ENCODE measurements at regions of chr1 and their contacts with region 1.

Region 1: GRCh38 chr1:205485338-205486228 is 18.9 kb upstream of the CDK18 start:
- DNase-seq: peak; percentile 89
- ATAC-seq: peak; percentile 82
- H3K4me3 ChIP-seq: no peak overlapping the region
- H3K27ac ChIP-seq: no peak overlapping the region
- H3K4me1 ChIP-seq: no peaks in the 10 kb centered on the region
- H3K27me3 ChIP-seq: peaks cover 7% of the 10 kb centered on the region; the same call in 1 of the 2 replicates
- CTCF ChIP-seq: peak; percentile 99

Region 2: GRCh38 chr1:204997591-204998355 is 487.8 kb before region 1 on chr1:
- CTCF ChIA-PET with region 1: no interaction called
- POLR2A ChIA-PET with region 1: no interaction called
- intact Hi-C with region 1: no loop called
- DNase-seq: no peak
- ATAC-seq: no peak
- H3K4me3 ChIP-seq: no peak overlapping the region
- H3K27ac ChIP-seq: no peak overlapping the region
- H3K4me1 ChIP-seq: no peaks in the 10 kb centered on the region
- H3K27me3 ChIP-seq: peaks cover 95% of the 10 kb centered on the region
- CTCF ChIP-seq: no peak

Region 3: GRCh38 chr1:205161076-205161475 is 324.5 kb before region 1 on chr1:
- CTCF ChIA-PET with region 1: no interaction called
- POLR2A ChIA-PET with region 1: no interaction called
- intact Hi-C with region 1: no loop called
- DNase-seq: no peak
- ATAC-seq: no peak
- H3K4me3 ChIP-seq: no peak overlapping the region
- H3K27ac ChIP-seq: no peak overlapping the region
- H3K4me1 ChIP-seq: no peaks in the 10 kb centered on the region
- H3K27me3 ChIP-seq: no peaks in the 10 kb centered on the region
- CTCF ChIP-seq: no peak

Region 4: DNA sequence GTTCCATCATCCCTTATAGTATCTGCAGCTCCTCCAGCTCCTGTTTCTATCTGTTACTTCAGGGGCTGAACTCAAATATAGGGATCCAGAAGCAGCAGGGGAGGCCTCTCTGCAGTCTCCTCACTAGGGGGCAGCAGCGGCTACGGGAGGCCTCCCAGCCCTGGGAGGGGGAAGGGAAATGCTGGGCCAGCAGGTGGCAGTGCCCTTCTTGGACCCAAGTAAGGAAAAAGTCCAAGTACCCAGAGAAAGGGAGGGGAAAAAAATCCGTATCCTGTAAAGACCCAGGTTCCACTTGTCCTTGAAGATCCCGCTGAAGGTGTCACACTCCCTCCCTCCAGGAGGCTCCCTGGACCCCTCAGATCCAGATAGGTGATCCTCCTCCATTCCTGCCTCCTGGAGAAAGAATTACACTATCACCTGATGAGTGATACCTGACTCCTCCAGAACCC is 149.9 kb before region 1 on chr1:
- CTCF ChIA-PET with region 1: interaction called, 9 read pairs
- POLR2A ChIA-PET with region 1: no interaction called
- intact Hi-C with region 1: loop called (anchors 1 kb)
- DNase-seq: peak; percentile 93
- ATAC-seq: peak; percentile 98
- H3K4me3 ChIP-seq: no peak overlapping the region
- H3K27ac ChIP-seq: no peak overlapping the region
- H3K4me1 ChIP-seq: no peaks in the 10 kb centered on the region
- H3K27me3 ChIP-seq: no peaks in the 10 kb centered on the region
- CTCF ChIP-seq: peak; percentile 99

Region 5: GRCh38 chr1:205396967-205397616 is 88.5 kb before region 1 on chr1:
- CTCF ChIA-PET with region 1: interaction called, 13 read pairs
- POLR2A ChIA-PET with region 1: no interaction called
- intact Hi-C with region 1: loop called (anchors 1 kb)
- DNase-seq: peak; percentile 86
- ATAC-seq: peak; percentile 82
- H3K4me3 ChIP-seq: no peak overlapping the region
- H3K27ac ChIP-seq: no peak overlapping the region
- H3K4me1 ChIP-seq: no peaks in the 10 kb centered on the region
- H3K27me3 ChIP-seq: peaks cover 6% of the 10 kb centered on the region; the same call in 1 of the 2 replicates
- CTCF ChIP-seq: peak; percentile 96

Region 6: GRCh38 chr1:205422993-205423625 is 62.5 kb before region 1 on chr1:
- CTCF ChIA-PET with region 1: interaction called, 24 read pairs
- POLR2A ChIA-PET with region 1: no interaction called
- intact Hi-C with region 1: loop called (anchors 1 kb)
- DNase-seq: peak; percentile 50
- ATAC-seq: peak; percentile 37; the same call in 1 of the 2 replicates
- H3K4me3 ChIP-seq: no peak overlapping the region
- H3K27ac ChIP-seq: no peak overlapping the region
- H3K4me1 ChIP-seq: no peaks in the 10 kb centered on the region
- H3K27me3 ChIP-seq: peaks cover 71% of the 10 kb centered on the region
- CTCF ChIP-seq: peak; percentile 67

Region 7: GRCh38 chr1:205449750-205450443 is 35.7 kb before region 1 on chr1:
- CTCF ChIA-PET with region 1: no interaction called
- POLR2A ChIA-PET with region 1: no interaction called
- intact Hi-C with region 1: no loop called
- DNase-seq: peak; percentile 97
- ATAC-seq: peak; percentile 92
- H3K4me3 ChIP-seq: peak overlapping the region; percentile 75
- H3K27ac ChIP-seq: peak overlapping the region; percentile 93
- H3K4me1 ChIP-seq: peaks cover 40% of the 10 kb centered on the region
- H3K27me3 ChIP-seq: peaks cover 24% of the 10 kb centered on the region
- CTCF ChIP-seq: no peak